Common myeloid progenitor, CD34-positive (primary cell): ENCODE measurements at regions of chr5 and their contacts with region 1.

Region 1: DNA sequence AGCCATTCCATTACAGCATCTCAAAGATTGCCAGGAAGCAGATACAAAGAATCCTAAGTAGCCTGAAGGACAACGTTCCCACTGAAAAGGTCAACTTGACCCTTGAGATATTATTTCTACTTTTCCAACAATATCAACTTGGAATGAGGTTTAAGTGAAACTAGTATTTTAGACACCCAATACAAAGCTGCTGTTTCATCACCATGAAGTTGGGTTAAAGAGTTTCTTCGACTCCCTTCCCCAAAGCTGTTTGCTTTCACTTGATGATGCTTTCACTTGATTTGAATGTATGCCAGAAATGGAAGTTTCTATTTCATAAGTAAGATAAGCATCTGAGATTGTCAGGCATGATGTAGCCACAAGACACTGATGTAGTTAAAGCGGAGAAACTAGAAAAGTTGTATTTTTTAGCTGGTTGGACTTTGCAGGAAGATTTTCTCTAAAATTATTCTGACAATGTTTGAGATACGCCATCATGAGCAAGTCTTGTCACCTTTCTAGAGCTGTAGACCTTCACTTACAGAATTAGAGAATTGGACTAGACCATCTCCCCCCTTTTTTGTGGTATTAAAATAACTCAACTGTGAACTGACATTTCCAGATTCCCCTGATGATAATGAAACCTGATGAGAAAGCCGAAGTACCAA is 20.1 kb downstream of the MOCS2 start:
- DNase-seq: peak; percentile 4 to 40 (median 31)
- H3K4me3 ChIP-seq: no peak overlapping the region
- H3K27ac ChIP-seq: no peak overlapping the region
- H3K4me1 ChIP-seq: no peaks in the 10 kb centered on the region
- H3K27me3 ChIP-seq: no peaks in the 10 kb centered on the region

Region 2: GRCh38 chr5:53035868-53036381 is 53.5 kb before region 1 on chr5:
- CTCF ChIA-PET with region 1: interaction called, 10 read pairs
- POLR2A ChIA-PET with region 1: no interaction called
- DNase-seq: peak in 2 of 3 donors; percentile 29 to 42
- H3K4me3 ChIP-seq: no peak overlapping the region
- H3K27ac ChIP-seq: no peak overlapping the region
- H3K4me1 ChIP-seq: peaks cover 0 to 11% (median 4%) of the 10 kb centered on the region in 4 experiments
- H3K27me3 ChIP-seq: no peaks in the 10 kb centered on the region